ENCODE measurements at regions of chr21 and their contacts with region 1.

Region 1: DNA sequence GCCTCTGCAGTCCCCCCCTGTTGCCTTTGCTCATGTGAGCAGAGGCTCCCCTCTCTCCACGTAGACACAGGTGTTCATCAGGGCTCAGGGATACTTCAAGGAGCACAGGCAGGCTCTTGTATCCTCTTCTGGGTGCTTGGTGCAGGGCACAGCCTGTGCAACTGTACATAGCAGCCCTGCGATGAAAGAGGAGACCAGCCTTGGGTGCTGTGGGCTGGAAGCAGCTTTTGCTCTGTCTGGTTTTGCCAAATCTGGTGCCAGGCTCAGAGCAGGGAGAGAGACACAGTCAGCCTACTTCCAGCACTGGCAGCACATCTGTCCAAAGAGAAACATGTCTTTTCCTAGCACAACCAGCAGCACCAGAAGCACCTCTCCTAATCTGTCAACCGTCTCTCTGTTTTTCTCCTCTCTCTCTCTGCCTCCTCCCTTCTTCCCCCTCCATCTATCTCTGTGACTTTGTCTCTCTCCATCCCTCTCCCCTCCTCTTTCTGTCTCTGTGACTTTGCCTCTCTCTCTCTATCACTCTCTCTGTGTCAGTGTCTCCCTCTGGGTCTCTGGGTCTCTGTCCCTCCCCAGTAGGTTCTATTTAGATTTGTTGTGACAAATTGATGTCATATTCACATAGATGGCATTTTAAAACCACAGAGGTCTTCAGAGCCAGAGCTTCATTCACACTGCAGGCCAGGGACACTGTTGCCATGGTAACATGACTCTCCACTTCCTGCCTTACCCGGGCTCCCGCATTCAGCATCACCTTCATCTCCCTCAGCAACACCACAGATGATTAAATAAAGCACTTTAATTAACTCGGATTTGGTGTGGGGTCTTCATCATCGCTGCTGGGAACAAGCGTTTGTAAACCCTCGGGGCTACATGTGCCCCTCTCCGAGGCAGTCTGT is 132.4 kb downstream of the ETS2 start:
- DNase-seq: no peak
- H3K4me3 ChIP-seq: no peak overlapping the region
- H3K27ac ChIP-seq: no peak overlapping the region
- H3K4me1 ChIP-seq: no peaks in the 10 kb centered on the region
- H3K27me3 ChIP-seq: no peaks in the 10 kb centered on the region
- CTCF ChIP-seq: no peak

Region 2: GRCh38 chr21:38798481-38798882 is 139.6 kb before region 1 on chr21:
- intact Hi-C with region 1: no loop called
- DNase-seq: peak in 1 of 2 donors; percentile 62
- H3K4me3 ChIP-seq: no peak overlapping the region
- H3K27ac ChIP-seq: no peak overlapping the region
- H3K4me1 ChIP-seq: no peaks in the 10 kb centered on the region
- H3K27me3 ChIP-seq: no peaks in the 10 kb centered on the region
- CTCF ChIP-seq: no peak

Region 3: DNA sequence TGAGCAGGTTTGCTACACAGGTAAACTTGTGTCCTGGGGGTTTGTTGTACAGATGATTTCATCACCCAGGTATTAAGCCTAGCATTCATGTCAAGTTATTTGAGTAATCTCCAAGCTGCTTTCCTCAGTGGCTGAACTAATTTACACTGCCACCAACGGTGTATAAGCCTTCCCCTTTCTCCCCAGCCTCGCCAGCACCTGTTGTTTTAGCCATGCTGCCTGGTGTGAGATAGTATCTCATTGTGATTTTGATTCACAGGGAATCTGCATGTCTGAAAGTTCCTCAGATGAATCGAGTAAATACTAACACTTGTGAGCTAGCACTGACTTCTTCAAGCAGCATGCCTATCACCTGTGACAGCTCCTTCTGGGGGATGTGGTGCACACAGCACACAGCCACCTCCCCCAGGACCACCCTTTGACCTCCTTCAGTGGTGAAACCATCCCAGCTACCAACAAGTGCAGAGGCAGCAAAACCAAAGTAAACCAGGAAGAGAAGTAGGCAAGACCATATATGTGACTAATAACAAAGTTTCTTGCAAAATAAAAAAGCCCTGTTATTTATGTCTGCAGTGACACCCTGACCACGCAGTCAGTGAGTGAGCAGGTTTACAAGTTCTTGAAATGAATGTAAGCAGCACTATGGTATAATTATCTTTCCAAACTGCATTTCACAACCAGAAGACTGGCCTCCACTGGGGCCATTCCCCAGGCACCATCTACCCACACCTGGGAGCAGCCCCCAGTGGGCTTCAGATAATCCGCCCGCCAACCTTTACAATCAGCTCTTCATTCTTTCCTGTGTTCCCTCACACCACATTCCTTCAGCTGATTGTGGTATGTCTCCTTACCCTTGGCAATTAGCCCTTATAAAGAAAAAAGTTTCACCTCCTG is 41.4 kb after region 1 on chr21:
- intact Hi-C with region 1: loop called (anchors 2 kb)
- DNase-seq: no peak
- H3K4me3 ChIP-seq: no peak overlapping the region
- H3K27ac ChIP-seq: no peak overlapping the region
- H3K4me1 ChIP-seq: peaks cover 0 to under 1% of the 10 kb centered on the region in 2 donors
- H3K27me3 ChIP-seq: no peaks in the 10 kb centered on the region
- CTCF ChIP-seq: no peak

Region 4: DNA sequence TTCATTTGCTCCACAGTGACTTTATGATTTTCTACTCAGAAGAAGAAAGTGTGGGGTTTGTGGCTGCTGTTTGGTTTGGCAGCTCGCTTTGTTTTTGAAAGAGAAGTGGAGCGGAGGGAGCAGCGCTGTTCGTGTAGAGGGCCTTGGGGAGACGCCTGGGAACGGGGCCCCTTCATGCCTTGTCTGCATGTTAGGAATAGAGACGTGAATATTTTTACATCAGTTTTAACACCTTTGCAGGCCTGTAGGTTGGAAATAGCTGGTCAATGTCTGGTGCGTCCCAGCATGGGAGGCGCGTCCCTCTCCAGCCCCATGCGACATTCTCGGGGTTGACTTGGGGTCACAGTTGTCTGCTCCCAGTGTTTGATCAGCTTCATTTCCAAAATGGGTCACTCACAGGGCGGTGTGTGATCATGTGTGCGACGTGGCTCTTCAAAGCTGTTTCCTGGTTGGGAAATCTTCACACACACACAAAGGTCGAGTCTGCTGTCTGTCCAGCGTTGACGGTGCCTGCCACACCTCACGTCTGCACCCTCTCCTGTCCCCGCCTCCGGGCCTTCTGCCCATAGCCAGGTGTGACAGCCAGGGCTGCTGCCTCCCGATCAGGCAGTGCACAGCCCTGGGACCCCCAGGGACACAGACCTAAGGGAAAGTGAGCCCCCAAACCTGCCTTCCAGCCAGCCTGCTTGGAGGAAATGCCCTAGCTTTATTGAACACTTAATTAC is 95.9 kb after region 1 on chr21:
- intact Hi-C with region 1: no loop called
- DNase-seq: peak in 1 of 2 donors; percentile 61
- H3K4me3 ChIP-seq: peak overlapping the region in 1 of 2 donors; percentile 25
- H3K27ac ChIP-seq: peak overlapping the region in 1 of 2 donors; percentile 36
- H3K4me1 ChIP-seq: peaks cover 0 to 11% of the 10 kb centered on the region in 2 donors
- H3K27me3 ChIP-seq: no peaks in the 10 kb centered on the region
- CTCF ChIP-seq: no peak

Region 5: GRCh38 chr21:39479142-39479813 is 541.2 kb after region 1 on chr21:
- intact Hi-C with region 1: no loop called
- DNase-seq: no peak
- H3K4me3 ChIP-seq: no peak overlapping the region
- H3K27ac ChIP-seq: no peak overlapping the region
- H3K4me1 ChIP-seq: peaks cover 0 to 1% of the 10 kb centered on the region in 2 donors
- H3K27me3 ChIP-seq: no peaks in the 10 kb centered on the region
- CTCF ChIP-seq: no peak